Naive thymus-derived CD4-positive, alpha-beta T cell (primary cell): ENCODE measurements at regions of chr18 and their contacts with region 1.

Region 1: GRCh38 chr18:54444319-54444914 is 86.7 kb downstream of the C18orf54 start:
- DNase-seq: peak in 2 of 9 donors; percentile 11 to 31
- ATAC-seq: no peak
- H3K4me3 ChIP-seq: no peak overlapping the region
- H3K4me3 Mint-ChIP-seq: no peak overlapping the region
- H3K27ac ChIP-seq: no peak overlapping the region
- H3K27ac Mint-ChIP-seq: no peak overlapping the region
- H3K4me1 ChIP-seq: no peaks in the 10 kb centered on the region
- H3K4me1 Mint-ChIP-seq: no peaks in the 10 kb centered on the region
- H3K27me3 ChIP-seq: no peaks in the 10 kb centered on the region
- H3K27me3 Mint-ChIP-seq: peaks cover 12 to 50% (median 39%) of the 10 kb centered on the region in 5 donors

Region 2: GRCh38 chr18:54558609-54559585 is 114.5 kb after region 1 on chr18:
- CTCF ChIA-PET with region 1: no interaction called
- POLR2A ChIA-PET with region 1: no interaction called
- intact Hi-C with region 1: loop called in 1 of 2 experiments (anchors 10 kb)
- DNase-seq: peak in 3 of 9 donors; percentile 6 to 12 (median 7)
- ATAC-seq: no peak
- H3K4me3 ChIP-seq: no peak overlapping the region
- H3K4me3 Mint-ChIP-seq: no peak overlapping the region
- H3K27ac ChIP-seq: no peak overlapping the region
- H3K27ac Mint-ChIP-seq: no peak overlapping the region
- H3K4me1 ChIP-seq: no peaks in the 10 kb centered on the region
- H3K4me1 Mint-ChIP-seq: no peaks in the 10 kb centered on the region
- H3K27me3 ChIP-seq: no peaks in the 10 kb centered on the region
- H3K27me3 Mint-ChIP-seq: peaks cover 0 to 8% (median 0%) of the 10 kb centered on the region in 5 donors

Region 3: GRCh38 chr18:54647176-54647575 is 202.8 kb after region 1 on chr18:
- CTCF ChIA-PET with region 1: no interaction called
- POLR2A ChIA-PET with region 1: no interaction called
- intact Hi-C with region 1: loop called in 1 of 2 experiments (anchors 1 kb)
- DNase-seq: no peak
- ATAC-seq: no peak
- H3K4me3 ChIP-seq: no peak overlapping the region
- H3K4me3 Mint-ChIP-seq: no peak overlapping the region
- H3K27ac ChIP-seq: no peak overlapping the region
- H3K27ac Mint-ChIP-seq: no peak overlapping the region
- H3K4me1 ChIP-seq: no peaks in the 10 kb centered on the region
- H3K4me1 Mint-ChIP-seq: no peaks in the 10 kb centered on the region
- H3K27me3 ChIP-seq: no peaks in the 10 kb centered on the region
- H3K27me3 Mint-ChIP-seq: peaks cover 6 to 21% (median 15%) of the 10 kb centered on the region in 5 donors